ENCODE measurements at regions of chr1 and their contacts with region 1.

Region 1: GRCh38 chr1:9455487-9456234 is 83.6 kb upstream of the SLC25A33 start:
- DNase-seq: peak; percentile 82
- CTCF ChIP-seq: peak; percentile 79

Region 2: GRCh38 chr1:9270290-9270883 is 185.3 kb before region 1 on chr1:
- CTCF ChIA-PET with region 1: interaction called, 33 read pairs
- POLR2A ChIA-PET with region 1: no interaction called
- DNase-seq: no peak
- CTCF ChIP-seq: no peak

Region 3: GRCh38 chr1:9281908-9282695 is 173.6 kb before region 1 on chr1:
- CTCF ChIA-PET with region 1: interaction called, 84 read pairs
- POLR2A ChIA-PET with region 1: no interaction called
- DNase-seq: no peak
- CTCF ChIP-seq: no peak

Region 4: GRCh38 chr1:9292361-9293240 is 163.1 kb before region 1 on chr1 and contains the start of gene SPSB1:
- CTCF ChIA-PET with region 1: interaction called, 84 read pairs
- POLR2A ChIA-PET with region 1: no interaction called
- DNase-seq: peak; percentile 81
- CTCF ChIP-seq: no peak

Region 5: DNA sequence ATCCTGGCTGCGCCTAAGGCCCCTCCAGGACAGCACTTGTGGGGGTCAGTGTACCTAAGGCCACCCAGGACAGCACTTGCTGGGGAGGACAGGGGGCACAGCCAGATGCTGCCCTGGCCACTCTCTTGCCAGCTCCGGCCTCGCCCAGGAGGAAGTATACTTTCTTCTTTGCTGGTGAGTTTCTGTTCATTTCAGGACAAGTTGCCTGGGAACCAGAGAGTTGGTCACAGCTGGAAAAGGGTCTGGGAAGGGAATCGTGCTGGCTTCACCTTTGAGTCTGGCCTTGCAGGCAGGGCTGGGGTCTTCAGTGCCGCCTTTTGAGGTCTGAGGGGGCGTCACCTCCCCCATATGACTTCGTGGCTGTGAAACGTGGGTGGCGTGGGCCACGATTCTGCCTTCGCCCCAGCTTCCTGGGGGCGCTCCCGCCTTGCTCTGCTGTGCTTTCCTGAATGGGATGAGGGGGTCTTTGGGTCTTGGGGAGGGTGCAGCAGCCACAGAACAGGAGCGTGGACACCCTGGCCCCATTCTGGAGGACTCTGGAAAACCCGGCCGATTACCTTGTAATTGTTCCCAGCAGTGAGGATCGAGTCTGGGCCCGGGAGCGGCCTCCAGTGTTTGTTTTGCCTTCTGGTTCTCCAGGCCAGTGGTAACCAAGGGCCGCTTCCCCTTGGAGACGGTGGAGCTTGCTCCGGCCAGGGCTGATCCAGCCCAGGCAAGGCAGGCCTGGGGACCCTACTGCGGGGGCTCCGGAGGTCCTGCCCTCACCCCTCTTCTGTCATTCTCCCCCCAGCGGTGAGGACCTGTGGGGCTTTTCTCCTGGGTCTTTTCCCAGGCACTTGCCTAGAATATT is 117.0 kb before region 1 on chr1:
- CTCF ChIA-PET with region 1: no interaction called
- POLR2A ChIA-PET with region 1: no interaction called
- DNase-seq: no peak
- CTCF ChIP-seq: no peak

Region 6: GRCh38 chr1:9438431-9439073 is 17.1 kb before region 1 on chr1:
- CTCF ChIA-PET with region 1: interaction called, 18 read pairs
- POLR2A ChIA-PET with region 1: no interaction called
- DNase-seq: no peak
- CTCF ChIP-seq: no peak

Region 7: GRCh38 chr1:9466780-9467758 is 11.4 kb after region 1 on chr1:
- CTCF ChIA-PET with region 1: interaction called, 11 read pairs
- POLR2A ChIA-PET with region 1: no interaction called
- DNase-seq: no peak
- CTCF ChIP-seq: no peak

Region 8: GRCh38 chr1:9539165-9539828 is 83.6 kb after region 1 on chr1 and contains the start of gene SLC25A33:
- CTCF ChIA-PET with region 1: no interaction called
- POLR2A ChIA-PET with region 1: no interaction called
- DNase-seq: peak; percentile 99
- CTCF ChIP-seq: no peak

Region 9: DNA sequence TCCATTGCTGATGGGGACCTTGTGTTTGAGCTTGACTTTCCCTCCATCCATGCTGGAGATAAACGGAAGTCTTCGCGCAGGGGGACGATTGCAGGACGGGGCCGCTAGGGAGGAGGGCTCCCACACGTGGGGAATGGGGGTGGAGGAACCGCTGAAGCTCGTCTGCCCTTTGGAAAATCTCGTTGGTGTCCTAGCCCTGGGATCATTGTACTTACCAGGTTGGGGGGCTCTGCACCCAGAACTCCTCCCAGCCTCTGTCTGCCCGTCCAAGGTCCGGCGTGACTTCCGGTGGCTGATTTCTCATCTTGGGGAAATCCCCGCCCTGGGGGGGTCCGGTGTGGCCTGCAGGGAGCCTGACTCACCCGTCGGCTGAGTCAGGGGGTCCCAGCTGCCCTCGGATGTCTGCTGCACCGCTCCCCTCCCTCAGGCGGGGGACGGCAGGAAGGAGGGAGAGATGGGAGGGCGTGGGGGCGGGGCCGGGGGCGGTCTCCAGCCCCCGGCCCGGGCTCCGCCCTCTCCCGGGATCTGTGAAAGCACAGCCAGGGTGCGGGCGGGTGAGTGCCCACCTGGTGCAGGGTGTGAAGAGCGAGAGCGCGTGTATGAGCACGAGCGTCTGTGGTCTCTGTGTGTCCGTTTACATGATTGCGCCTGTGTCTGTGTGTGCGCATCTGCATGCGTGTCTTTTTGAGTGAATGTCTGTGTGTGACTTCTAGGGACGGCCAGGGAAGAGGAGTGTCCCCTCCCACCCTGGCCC is 231.6 kb after region 1 on chr1:
- CTCF ChIA-PET with region 1: no interaction called
- POLR2A ChIA-PET with region 1: no interaction called
- DNase-seq: peak; percentile 78
- CTCF ChIP-seq: peak; percentile 2

Measured in GM10248 (cell line).